CD14-positive monocyte (primary cell): ENCODE measurements at regions of chr2 and their contacts with region 1.

Region 1: GRCh38 chr2:64767670-64768468 is 114.2 kb upstream of the SERTAD2 start:
- DNase-seq: peak; percentile 82 to 88 (median 83)
- H3K4me3 ChIP-seq: peak overlapping the region; percentile 53 to 86 (median 77)
- H3K4me3 Mint-ChIP-seq: peak overlapping the region; percentile 87 to 92
- H3K27ac ChIP-seq: peak overlapping the region; percentile 73 to 89
- H3K27ac Mint-ChIP-seq: peak overlapping the region; percentile 92 to 98 (median 96)
- H3K4me1 ChIP-seq: peaks cover 21 to 32% of the 10 kb centered on the region in 2 donors
- H3K4me1 Mint-ChIP-seq: peaks cover 33% of the 10 kb centered on the region
- H3K27me3 ChIP-seq: no peaks in the 10 kb centered on the region
- H3K27me3 Mint-ChIP-seq: peaks cover 0 to 10% (median 2%) of the 10 kb centered on the region in 3 donors
- CTCF ChIP-seq: no peak

Region 2: DNA sequence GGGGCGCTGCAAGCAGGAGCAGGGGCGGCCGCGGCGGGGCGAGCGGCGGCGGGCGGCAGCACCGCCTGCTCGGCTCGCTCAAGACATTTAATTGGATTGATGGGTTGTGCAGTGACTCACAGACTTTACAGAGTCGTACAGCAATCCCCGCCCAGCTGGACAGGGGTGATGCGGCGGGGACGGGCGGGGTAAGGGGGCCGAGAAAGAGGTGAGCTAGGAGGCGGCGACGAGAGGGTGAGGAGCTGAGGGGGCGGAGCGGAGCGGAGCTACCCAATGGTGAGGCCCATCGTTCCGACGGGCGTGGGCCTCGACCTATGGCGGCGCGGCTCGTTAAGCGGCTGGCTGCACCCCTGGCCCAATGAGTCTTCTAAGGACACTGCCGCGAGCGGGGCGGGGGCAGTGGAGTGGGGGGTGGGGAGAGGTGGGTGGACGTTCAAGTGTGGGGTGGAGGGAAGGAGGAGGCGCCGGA is 17.0 kb before region 1 on chr2:
- intact Hi-C with region 1: loop called in 1 of 2 experiments (anchors 1 kb)
- DNase-seq: peak; percentile 100
- H3K4me3 ChIP-seq: peak overlapping the region; percentile 85 to 98 (median 97)
- H3K4me3 Mint-ChIP-seq: peak overlapping the region; percentile 93 to 99
- H3K27ac ChIP-seq: peak overlapping the region; percentile 99 to 100
- H3K27ac Mint-ChIP-seq: peak overlapping the region; percentile 98 to 100 (median 99)
- H3K4me1 ChIP-seq: peaks cover 36 to 39% of the 10 kb centered on the region in 2 donors
- H3K4me1 Mint-ChIP-seq: peaks cover 32% of the 10 kb centered on the region
- H3K27me3 ChIP-seq: no peaks in the 10 kb centered on the region
- H3K27me3 Mint-ChIP-seq: no peaks in the 10 kb centered on the region
- CTCF ChIP-seq: no peak

Region 3: DNA sequence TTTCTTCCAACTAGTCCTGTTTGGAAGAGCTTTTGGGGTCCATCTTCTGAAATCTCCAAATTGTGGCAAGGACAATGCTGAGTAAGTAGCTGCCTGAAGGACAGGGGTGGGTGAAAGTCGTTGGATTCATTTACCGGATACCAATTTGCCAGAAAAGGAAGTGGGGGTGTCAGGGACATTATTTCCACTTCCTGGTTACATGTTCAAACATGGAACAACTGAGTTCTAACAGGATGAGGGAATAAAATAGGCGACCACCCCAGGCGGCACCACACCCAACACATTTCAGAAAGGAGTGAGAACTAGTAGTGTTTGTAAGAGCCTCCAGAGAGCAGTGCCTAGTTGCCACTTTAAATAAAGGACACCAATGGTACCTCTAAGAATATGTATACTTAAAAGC is 44.4 kb after region 1 on chr2:
- intact Hi-C with region 1: loop called in 1 of 2 experiments (anchors 5 kb)
- DNase-seq: peak in 2 of 3 donors; percentile 24 to 37
- H3K4me3 ChIP-seq: no peak overlapping the region
- H3K4me3 Mint-ChIP-seq: peak overlapping the region; percentile 21 to 61
- H3K27ac ChIP-seq: no peak overlapping the region
- H3K27ac Mint-ChIP-seq: peak overlapping the region in 3 of 7 donors; percentile 20 to 78 (median 70)
- H3K4me1 ChIP-seq: peaks cover 5 to 12% of the 10 kb centered on the region in 2 donors
- H3K4me1 Mint-ChIP-seq: peaks cover 15% of the 10 kb centered on the region
- H3K27me3 ChIP-seq: no peaks in the 10 kb centered on the region
- H3K27me3 Mint-ChIP-seq: peaks cover 0 to 4% (median 4%) of the 10 kb centered on the region in 3 donors
- CTCF ChIP-seq: no peak

Region 4: DNA sequence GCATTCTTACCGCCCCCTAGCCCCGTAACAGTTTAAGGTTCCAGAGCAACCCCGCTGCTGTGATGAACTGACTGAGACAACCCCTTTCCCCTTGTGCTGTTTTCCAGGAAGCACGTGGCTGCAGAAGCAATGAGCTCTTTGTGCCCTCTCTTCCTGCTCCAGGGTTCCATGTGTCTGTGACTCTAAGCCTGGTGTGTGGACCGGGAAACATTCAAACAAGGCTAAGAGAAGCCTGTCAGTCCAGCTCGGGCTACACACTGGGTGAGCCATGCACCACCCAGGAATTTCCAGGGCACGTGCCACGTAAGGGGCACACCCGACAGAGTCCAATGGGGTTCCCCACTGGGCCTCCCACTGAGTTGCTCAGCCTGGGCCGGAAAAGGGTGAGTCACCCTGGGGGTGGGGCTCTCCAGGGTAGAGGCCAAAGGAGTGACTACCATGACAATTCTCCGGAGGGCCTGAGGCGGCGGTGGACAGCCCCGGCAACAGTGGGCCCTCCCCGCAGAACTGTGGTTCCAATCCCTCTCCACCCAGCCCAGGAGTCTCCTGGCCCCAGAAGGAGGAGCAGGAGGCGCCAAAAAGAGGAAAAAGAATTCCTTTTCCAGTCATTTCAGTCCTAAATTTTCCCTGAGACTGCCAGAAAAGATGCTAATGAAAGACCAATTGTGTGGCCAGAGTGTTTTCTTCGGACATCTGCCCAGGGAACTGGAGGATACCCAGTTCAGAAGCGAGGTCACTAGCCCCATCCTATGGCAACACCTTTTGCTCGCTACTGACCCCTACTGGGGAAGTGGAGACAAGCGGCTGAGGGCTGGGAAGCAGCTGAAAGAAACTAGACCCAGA is 63.5 kb after region 1 on chr2:
- intact Hi-C with region 1: loop called (anchors 5 kb)
- DNase-seq: peak; percentile 97 to 100 (median 98)
- H3K4me3 ChIP-seq: peak overlapping the region in 1 of 3 experiments; percentile 47
- H3K4me3 Mint-ChIP-seq: peak overlapping the region; percentile 54 to 63
- H3K27ac ChIP-seq: peak overlapping the region; percentile 80 to 95
- H3K27ac Mint-ChIP-seq: peak overlapping the region; percentile 94 to 99 (median 96)
- H3K4me1 ChIP-seq: peaks cover 21 to 39% of the 10 kb centered on the region in 2 donors
- H3K4me1 Mint-ChIP-seq: peaks cover 40% of the 10 kb centered on the region
- H3K27me3 ChIP-seq: no peaks in the 10 kb centered on the region
- H3K27me3 Mint-ChIP-seq: peaks cover 0 to 6% (median 4%) of the 10 kb centered on the region in 3 donors
- CTCF ChIP-seq: peak; percentile 91

Region 5: GRCh38 chr2:64865073-64865830 is 97.4 kb after region 1 on chr2:
- intact Hi-C with region 1: loop called in 1 of 2 experiments (anchors 5 kb)
- DNase-seq: peak; percentile 56 to 72 (median 69)
- H3K4me3 ChIP-seq: peak overlapping the region; percentile 51 to 75 (median 59)
- H3K4me3 Mint-ChIP-seq: peak overlapping the region; percentile 80 to 87
- H3K27ac ChIP-seq: peak overlapping the region; percentile 74 to 98
- H3K27ac Mint-ChIP-seq: peak overlapping the region in 4 of 7 donors; percentile 80 to 89 (median 84)
- H3K4me1 ChIP-seq: peaks cover 51 to 52% of the 10 kb centered on the region in 2 donors
- H3K4me1 Mint-ChIP-seq: peaks cover 14% of the 10 kb centered on the region
- H3K27me3 ChIP-seq: no peaks in the 10 kb centered on the region
- H3K27me3 Mint-ChIP-seq: peaks cover 0 to 9% (median 0%) of the 10 kb centered on the region in 3 donors
- CTCF ChIP-seq: peak; percentile 96